Endothelial cell of umbilical vein (primary cell): ENCODE measurements at regions of chr14 and their contacts with region 1.

Region 1: GRCh38 chr14:101947906-101948665 is 16.3 kb upstream of the DYNC1H1 start:
- DNase-seq: peak; percentile 100
- H3K4me3 ChIP-seq: peak overlapping the region; percentile 34 to 74 (median 53)
- H3K27ac ChIP-seq: peak overlapping the region; percentile 80
- H3K4me1 ChIP-seq: peaks cover 10% of the 10 kb centered on the region
- H3K27me3 ChIP-seq: peaks cover 6 to 8% of the 10 kb centered on the region in 2 experiments
- CTCF ChIP-seq: no peak
- POLR2A ChIP-seq: peak; percentile 88

Region 2: GRCh38 chr14:100747021-100747586 is 1201.0 kb before region 1 on chr14:
- CTCF ChIA-PET with region 1: no interaction called
- POLR2A ChIA-PET with region 1: no interaction called
- dilution Hi-C with region 1: no loop called
- intact Hi-C with region 1: no loop called
- DNase-seq: no peak
- H3K4me3 ChIP-seq: no peak overlapping the region
- H3K27ac ChIP-seq: no peak overlapping the region
- H3K4me1 ChIP-seq: no peaks in the 10 kb centered on the region
- H3K27me3 ChIP-seq: peaks cover 0 to 2% of the 10 kb centered on the region in 2 experiments
- CTCF ChIP-seq: no peak
- POLR2A ChIP-seq: no peak

Region 3: GRCh38 chr14:101721951-101722661 is 226.0 kb before region 1 on chr14:
- CTCF ChIA-PET with region 1: no interaction called
- POLR2A ChIA-PET with region 1: no interaction called
- dilution Hi-C with region 1: no loop called
- intact Hi-C with region 1: loop called (anchors 5 kb)
- DNase-seq: peak; percentile 80
- H3K4me3 ChIP-seq: no peak overlapping the region
- H3K27ac ChIP-seq: no peak overlapping the region
- H3K4me1 ChIP-seq: peaks cover 12% of the 10 kb centered on the region
- H3K27me3 ChIP-seq: peaks cover 26 to 28% of the 10 kb centered on the region in 2 experiments
- CTCF ChIP-seq: no peak
- POLR2A ChIP-seq: no peak

Region 4: DNA sequence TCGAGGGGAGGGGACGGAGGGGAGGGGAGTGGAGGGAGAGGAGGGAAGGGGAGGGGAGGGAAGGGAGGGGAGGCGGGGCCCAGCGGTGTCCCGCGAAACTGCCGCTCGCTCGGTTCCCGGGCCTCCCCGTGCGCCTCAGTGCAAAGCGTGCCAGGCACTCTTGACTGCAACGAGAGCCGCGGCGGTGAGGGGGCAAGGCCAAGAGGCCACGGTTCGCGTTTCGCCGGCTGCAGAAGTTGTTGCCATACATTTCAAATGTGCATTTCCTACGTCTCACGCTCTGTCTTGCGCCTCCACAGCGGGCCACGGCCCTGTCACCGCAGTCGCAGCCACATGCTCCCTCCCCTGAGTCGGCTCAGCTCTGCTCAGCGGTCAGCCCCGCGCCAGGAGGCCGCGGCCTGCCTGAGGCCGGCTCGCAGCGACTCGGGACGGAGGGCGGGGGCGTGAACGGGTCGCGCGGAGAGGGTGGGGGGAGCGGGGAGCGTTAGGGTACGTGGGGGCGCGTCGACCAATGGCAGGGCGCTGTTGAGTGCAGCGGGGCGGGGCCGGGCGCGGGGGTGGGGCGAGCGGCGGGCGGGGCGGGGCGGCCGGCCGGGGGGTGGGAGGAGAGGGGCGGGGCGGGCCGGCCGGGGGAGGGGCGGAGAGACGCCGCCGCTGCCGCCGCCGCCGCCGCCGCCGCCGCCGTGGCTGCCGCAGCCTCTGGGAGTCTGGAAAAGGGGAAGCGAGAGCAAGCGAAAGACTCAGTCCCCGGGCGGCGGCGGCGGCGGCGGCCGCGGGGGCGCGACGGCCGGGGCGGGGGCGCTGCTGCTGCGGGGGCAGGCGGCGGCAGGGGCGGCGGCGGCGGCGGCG is 186.8 kb before region 1 on chr14 and contains the start of gene PPP2R5C:
- CTCF ChIA-PET with region 1: no interaction called
- POLR2A ChIA-PET with region 1: interaction called, 3 read pairs
- dilution Hi-C with region 1: no loop called
- intact Hi-C with region 1: loop called (anchors 1 kb)
- DNase-seq: peak; percentile 83
- H3K4me3 ChIP-seq: peak within 1 kb of the TSS; percentile 50 to 64 (median 52)
- H3K27ac ChIP-seq: no peak within 1 kb of the TSS
- H3K4me1 ChIP-seq: peaks cover 6% of the 10 kb centered on the region
- H3K27me3 ChIP-seq: peaks cover 13 to 32% of the 10 kb centered on the region in 2 experiments
- CTCF ChIP-seq: no peak
- POLR2A ChIP-seq: no peak
- total RNA-seq, gene PPP2R5C: 83.6 and 89.0 TPM in 2 replicates

Region 5: GRCh38 chr14:101876555-101876938 is 71.5 kb before region 1 on chr14:
- CTCF ChIA-PET with region 1: no interaction called
- POLR2A ChIA-PET with region 1: no interaction called
- dilution Hi-C with region 1: no loop called
- intact Hi-C with region 1: loop called (anchors 1 kb)
- DNase-seq: peak; percentile 99
- H3K4me3 ChIP-seq: no peak overlapping the region
- H3K27ac ChIP-seq: peak overlapping the region; percentile 70
- H3K4me1 ChIP-seq: peaks cover 20% of the 10 kb centered on the region
- H3K27me3 ChIP-seq: no peaks in the 10 kb centered on the region
- CTCF ChIP-seq: no peak
- POLR2A ChIP-seq: no peak

Region 6: GRCh38 chr14:101964297-101965144 is 16.4 kb after region 1 on chr14 and contains the start of gene DYNC1H1:
- CTCF ChIA-PET with region 1: interaction called, 5 read pairs
- POLR2A ChIA-PET with region 1: interaction called, 4 read pairs
- dilution Hi-C with region 1: no loop called
- intact Hi-C with region 1: loop called (anchors 1 kb)
- DNase-seq: peak; percentile 96
- H3K4me3 ChIP-seq: peak within 1 kb of the TSS; percentile 75 to 95 (median 90)
- H3K27ac ChIP-seq: peak within 1 kb of the TSS; percentile 64
- H3K4me1 ChIP-seq: peaks cover 14% of the 10 kb centered on the region
- H3K27me3 ChIP-seq: no peaks in the 10 kb centered on the region
- CTCF ChIP-seq: no peak
- POLR2A ChIP-seq: peak; percentile 93
- total RNA-seq, gene DYNC1H1: 596 and 648 TPM in 2 replicates

Region 7: DNA sequence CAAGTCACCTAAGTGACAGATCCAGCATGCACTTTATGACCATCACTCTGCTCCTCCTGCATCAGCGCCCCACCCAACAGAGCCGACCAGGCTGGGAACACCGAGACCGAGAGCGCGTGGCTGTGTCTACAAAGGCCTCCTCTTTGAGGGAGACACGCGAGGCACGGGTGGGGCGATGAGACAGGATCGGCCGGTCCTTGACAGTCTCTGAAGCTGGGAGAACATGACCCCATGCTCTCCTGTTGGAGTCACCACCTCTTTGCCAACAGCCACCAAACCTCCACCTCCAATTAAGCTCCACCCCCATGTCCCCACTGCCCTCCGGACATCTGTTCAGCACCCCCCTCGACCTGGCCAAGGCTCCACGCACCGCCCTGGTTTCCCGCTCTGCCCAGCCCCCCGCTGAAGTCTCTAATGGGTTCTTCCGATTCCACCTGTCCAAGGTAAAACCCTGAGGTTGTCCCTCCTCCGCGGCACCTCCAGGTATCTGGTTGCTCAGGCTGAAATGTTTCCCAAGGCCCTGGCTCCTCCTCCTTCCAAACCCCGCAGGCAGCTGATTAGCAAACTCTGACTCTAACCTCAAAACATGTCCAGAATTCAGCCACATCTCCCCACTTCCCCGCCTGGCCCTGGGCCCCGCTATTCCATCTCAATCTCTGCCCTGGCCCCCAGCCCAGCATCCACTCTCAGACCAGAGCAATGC is 107.3 kb after region 1 on chr14:
- CTCF ChIA-PET with region 1: no interaction called
- POLR2A ChIA-PET with region 1: no interaction called
- dilution Hi-C with region 1: no loop called
- intact Hi-C with region 1: no loop called
- DNase-seq: no peak
- H3K4me3 ChIP-seq: no peak overlapping the region
- H3K27ac ChIP-seq: no peak overlapping the region
- H3K4me1 ChIP-seq: no peaks in the 10 kb centered on the region
- H3K27me3 ChIP-seq: no peaks in the 10 kb centered on the region
- CTCF ChIP-seq: no peak
- POLR2A ChIP-seq: no peak

Region 8: DNA sequence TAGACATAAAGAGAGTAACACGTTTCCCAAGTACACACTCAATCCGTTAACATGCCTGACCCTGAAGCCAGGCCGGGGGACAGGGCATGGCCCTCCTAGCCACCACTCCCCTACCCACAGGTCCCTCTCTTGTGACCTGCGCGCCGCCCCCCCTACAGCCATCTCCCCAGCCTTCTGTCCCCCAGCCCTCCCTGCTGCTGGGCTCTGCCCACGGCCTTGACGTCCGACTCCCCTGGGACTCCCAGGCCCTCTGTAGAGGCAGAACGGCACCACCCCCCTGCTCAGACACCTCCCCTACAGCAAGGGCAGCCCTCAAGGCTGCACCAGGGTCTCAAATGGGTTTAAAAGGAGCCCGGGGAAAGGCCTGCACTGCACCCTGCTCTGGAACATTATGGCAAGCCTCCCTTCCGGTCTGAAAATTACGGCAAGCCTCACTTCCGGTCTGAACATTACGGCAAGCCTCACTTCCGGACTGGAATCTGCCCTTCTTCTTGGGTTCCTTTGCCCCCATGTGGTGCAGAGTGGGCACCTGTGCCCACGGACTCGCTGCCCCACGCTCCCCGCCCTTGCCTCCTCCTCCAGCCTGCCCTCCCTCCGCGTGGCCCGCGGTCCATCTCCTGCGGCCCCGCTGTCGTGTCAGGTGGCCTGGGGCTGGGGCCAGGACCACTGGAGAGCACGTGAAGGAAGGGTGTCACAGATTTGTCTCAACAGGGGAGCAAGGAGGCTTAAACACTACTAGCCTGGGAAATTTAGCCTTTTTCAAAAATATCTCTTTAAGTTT is 279.3 kb after region 1 on chr14:
- CTCF ChIA-PET with region 1: no interaction called
- POLR2A ChIA-PET with region 1: no interaction called
- dilution Hi-C with region 1: no loop called
- intact Hi-C with region 1: no loop called
- DNase-seq: no peak
- H3K4me3 ChIP-seq: no peak overlapping the region
- H3K27ac ChIP-seq: no peak overlapping the region
- H3K4me1 ChIP-seq: no peaks in the 10 kb centered on the region
- H3K27me3 ChIP-seq: no peaks in the 10 kb centered on the region
- CTCF ChIP-seq: no peak
- POLR2A ChIP-seq: no peak